Psoas muscle (tissue), 8 donors: ENCODE measurements at regions of chr22 and their contacts with region 1.

Region 1: DNA sequence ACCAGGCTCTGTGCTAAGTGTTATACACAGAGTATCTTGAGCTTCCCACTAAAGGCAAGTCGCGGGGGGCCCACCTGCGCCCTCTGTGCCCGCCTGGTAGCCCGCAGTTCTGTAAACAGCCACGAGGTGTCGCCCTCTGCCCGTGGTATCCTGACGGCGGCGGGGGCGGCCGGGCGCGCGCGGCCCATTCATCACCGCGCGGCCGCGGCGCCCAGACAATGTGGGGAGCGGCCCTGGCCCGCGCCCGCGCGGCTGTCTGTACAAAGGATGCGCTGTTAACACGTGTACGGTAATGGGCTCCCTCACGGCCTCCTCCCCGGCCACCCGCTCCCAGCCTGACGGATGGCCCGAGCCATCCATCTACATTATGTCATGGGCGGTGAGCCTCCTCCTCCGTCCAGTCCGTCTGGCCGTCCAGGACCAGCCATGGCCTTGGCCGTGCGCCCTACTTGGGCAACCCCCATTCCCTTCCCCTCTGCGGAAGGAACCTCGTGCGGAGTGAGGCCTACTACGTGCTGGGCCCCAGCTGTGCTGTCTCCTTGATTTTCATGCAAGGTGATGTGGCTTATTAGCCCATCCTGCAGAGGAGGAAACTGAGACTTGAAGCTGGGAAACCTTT is 99.4 kb downstream of the MIAT start:
- DNase-seq: peak; percentile 66 to 68
- ATAC-seq: peak; percentile 77 to 92 (median 87)
- H3K4me3 ChIP-seq: peak overlapping the region; percentile 54
- H3K27ac ChIP-seq: no peak overlapping the region
- H3K4me1 ChIP-seq: no peaks in the 10 kb centered on the region
- H3K27me3 ChIP-seq: no peaks in the 10 kb centered on the region
- CTCF ChIP-seq: peak; percentile 99

Region 2: GRCh38 chr22:27825174-27825573 is 1068.4 kb after region 1 on chr22:
- intact Hi-C with region 1: loop called in 1 of 2 experiments (anchors 5 kb)
- DNase-seq: no peak
- ATAC-seq: no peak
- H3K4me3 ChIP-seq: no peak overlapping the region
- H3K27ac ChIP-seq: no peak overlapping the region
- H3K4me1 ChIP-seq: no peaks in the 10 kb centered on the region
- H3K27me3 ChIP-seq: peaks cover 0 to 2% (median 0%) of the 10 kb centered on the region in 3 donors
- CTCF ChIP-seq: peak; percentile 20